ENCODE measurements at regions of chr1 and their contacts with region 1.

Region 1: DNA sequence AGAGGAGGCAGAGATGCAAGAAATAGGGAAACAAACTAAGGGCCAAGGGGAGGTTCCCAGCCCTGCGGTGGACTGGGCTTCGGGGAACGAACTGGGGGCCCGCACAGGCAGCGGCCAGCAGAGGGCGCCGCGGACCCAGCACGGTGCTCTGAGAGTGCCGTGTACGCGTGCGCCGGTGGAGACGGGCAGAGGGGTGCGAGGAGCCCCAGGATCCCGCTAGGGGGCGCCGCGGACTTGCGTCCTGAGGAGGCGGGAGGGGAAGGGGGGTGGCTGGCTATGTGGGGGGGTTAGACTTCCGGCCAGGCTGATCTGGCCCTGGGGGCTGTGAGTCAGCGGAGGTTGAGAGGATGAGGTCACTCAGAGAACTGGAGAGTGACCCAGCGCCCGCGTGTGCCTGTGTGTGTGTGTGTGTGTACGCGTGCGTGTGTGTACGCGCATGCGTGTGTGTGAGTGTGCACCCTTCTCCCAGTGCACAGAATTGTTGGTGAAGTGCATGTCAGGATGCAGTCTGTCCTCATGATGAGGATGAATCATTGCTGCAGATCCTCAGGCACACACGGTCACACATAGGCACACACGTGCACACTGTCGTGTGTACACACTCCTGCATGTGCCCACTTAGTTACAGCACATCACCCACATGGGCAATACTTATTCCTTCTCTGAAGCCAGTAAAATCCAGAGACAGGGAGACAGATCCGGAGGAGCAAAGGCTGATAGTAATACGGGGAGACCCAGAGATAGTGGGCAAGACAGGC is 17.0 kb downstream of the NES start:
- DNase-seq: peak; percentile 95
- H3K4me3 ChIP-seq: peak overlapping the region; percentile 27 to 54 (median 46)
- H3K27ac ChIP-seq: peak overlapping the region; percentile 51
- H3K4me1 ChIP-seq: peaks cover 41% of the 10 kb centered on the region
- H3K27me3 ChIP-seq: no peaks in the 10 kb centered on the region
- CTCF ChIP-seq: peak; percentile 91 to 98

Region 2: DNA sequence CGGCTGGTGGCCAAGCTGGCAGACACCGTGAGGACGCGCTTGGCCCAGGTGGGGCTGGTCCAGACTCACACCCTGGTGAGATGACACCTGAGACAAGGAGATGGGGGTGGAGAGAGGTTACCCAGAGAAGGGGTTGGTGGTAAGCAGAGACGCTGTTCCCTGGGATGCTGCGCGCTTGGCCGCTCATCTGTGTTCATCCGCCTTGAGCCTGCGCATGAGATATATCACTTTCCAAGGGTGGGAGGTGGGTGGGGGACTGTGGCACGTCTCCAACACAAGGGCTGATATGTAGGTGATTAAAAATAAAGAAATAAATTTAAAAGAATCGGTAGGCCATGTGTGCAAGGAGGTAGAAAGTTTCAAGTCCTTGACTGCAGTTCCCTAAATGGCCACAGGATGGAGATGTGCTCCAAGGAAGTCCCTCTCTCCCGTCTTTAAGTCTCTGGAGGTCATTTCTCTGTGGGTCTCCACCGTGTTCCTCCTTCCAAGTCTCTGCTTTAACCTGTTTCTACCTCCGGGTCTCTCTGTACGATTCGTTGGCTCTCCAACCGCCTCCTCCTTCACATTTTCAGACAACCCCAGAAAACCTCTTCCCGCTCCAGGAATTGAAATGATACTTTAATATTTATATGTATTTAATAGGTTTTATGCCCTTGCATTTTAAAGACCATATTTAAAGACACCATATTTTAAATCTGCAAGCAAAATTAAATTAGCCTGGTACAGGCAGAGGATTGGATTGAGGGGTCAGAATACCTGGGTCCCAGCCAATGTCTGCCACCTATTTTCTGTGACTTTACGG is 76.2 kb before region 1 on chr1:
- CTCF ChIA-PET with region 1: no interaction called
- dilution Hi-C with region 1: no loop called
- in situ Hi-C with region 1: no loop called
- intact Hi-C with region 1: loop called (anchors 1 kb)
- DNase-seq: peak; percentile 56
- H3K4me3 ChIP-seq: no peak overlapping the region
- H3K27ac ChIP-seq: no peak overlapping the region
- H3K4me1 ChIP-seq: no peaks in the 10 kb centered on the region
- H3K27me3 ChIP-seq: no peaks in the 10 kb centered on the region
- CTCF ChIP-seq: peak; percentile 89

Region 3: GRCh38 chr1:156625436-156626078 is 34.6 kb before region 1 on chr1:
- CTCF ChIA-PET with region 1: interaction called, 5 read pairs
- dilution Hi-C with region 1: no loop called
- in situ Hi-C with region 1: no loop called
- intact Hi-C with region 1: loop called (anchors 1 kb)
- DNase-seq: no peak
- H3K4me3 ChIP-seq: no peak overlapping the region
- H3K27ac ChIP-seq: no peak overlapping the region
- H3K4me1 ChIP-seq: peaks cover 20% of the 10 kb centered on the region
- H3K27me3 ChIP-seq: peaks cover 19% of the 10 kb centered on the region
- CTCF ChIP-seq: peak; percentile 58 to 75

Region 4: GRCh38 chr1:156677616-156678596 is 17.7 kb after region 1 on chr1:
- CTCF ChIA-PET with region 1: interaction called, 4 read pairs
- dilution Hi-C with region 1: no loop called
- in situ Hi-C with region 1: no loop called
- intact Hi-C with region 1: loop called (anchors 1 kb)
- DNase-seq: peak; percentile 67
- H3K4me3 ChIP-seq: no peak overlapping the region
- H3K27ac ChIP-seq: no peak overlapping the region
- H3K4me1 ChIP-seq: peaks cover 4% of the 10 kb centered on the region
- H3K27me3 ChIP-seq: peaks cover 19% of the 10 kb centered on the region
- CTCF ChIP-seq: peak; percentile 91 to 94

Region 5: DNA sequence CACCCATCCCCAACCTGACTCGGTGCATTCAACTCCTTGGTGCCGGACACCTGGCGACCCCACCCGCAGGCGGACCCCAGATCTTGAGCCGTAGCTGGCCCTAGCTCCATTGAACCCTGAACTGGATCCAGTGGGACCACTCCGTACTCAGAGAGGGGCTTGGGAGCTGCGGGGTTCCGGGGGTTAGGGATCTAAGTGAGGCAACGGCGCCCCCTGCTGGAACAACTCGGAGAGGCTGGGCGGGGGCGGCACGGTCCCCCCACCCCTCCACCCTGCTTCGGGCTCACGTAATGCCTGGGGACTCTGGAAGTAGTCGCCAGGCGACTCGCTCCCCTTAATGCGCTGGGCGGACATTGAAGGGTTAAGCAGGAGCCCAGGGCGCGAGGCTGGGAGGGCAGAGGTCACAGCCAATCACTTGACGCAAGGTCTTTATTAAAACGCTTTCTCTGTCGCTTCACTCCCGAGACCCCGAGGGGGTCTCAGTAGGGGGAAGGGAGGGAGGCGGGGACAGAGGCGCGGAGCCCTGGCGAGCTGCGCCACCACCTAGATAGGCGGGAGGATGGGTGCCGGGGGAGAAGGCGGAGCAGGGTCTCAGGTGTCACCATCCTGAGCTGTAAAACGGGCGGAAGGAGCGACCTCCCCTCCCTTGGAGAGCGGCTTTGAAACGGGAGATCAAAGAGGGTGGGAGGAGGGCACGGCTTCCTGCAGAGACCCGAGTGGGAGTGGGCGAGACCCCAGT is 45.9 kb after region 1 on chr1:
- CTCF ChIA-PET with region 1: no interaction called
- dilution Hi-C with region 1: no loop called
- in situ Hi-C with region 1: no loop called
- intact Hi-C with region 1: loop called (anchors 1 kb)
- DNase-seq: no peak
- H3K4me3 ChIP-seq: peak overlapping the region; percentile 16 to 35 (median 22)
- H3K27ac ChIP-seq: no peak overlapping the region
- H3K4me1 ChIP-seq: peaks cover 54% of the 10 kb centered on the region
- H3K27me3 ChIP-seq: no peaks in the 10 kb centered on the region
- CTCF ChIP-seq: peak; percentile 59 to 89

Measured in mammary epithelial cell (primary cell).